Activated CD4-positive, alpha-beta T cell treated with anti-CD3 and anti-CD28 coated beads, Interleukin-2, amount 10 ng/mL, durations not matched to agents 7 days and 5 days (primary cell): ENCODE measurements at regions of chr5 and their contacts with region 1.

Region 1: GRCh38 chr5:134586866-134587524 is 45.6 kb downstream of the SAR1B start:
- DNase-seq: peak; percentile 86
- H3K4me3 Mint-ChIP-seq: no peak overlapping the region
- H3K27ac Mint-ChIP-seq: peak overlapping the region; percentile 81
- H3K4me1 Mint-ChIP-seq: peaks cover 14% of the 10 kb centered on the region
- H3K27me3 Mint-ChIP-seq: no peaks in the 10 kb centered on the region

Region 2: GRCh38 chr5:134304311-134304710 is 282.7 kb before region 1 on chr5:
- CTCF ChIA-PET with region 1: interaction called, 18 read pairs
- POLR2A ChIA-PET with region 1: no interaction called
- DNase-seq: no peak
- H3K4me3 Mint-ChIP-seq: no peak overlapping the region
- H3K27ac Mint-ChIP-seq: no peak overlapping the region
- H3K4me1 Mint-ChIP-seq: peaks cover 8% of the 10 kb centered on the region
- H3K27me3 Mint-ChIP-seq: peaks cover 2% of the 10 kb centered on the region

Region 3: GRCh38 chr5:134493461-134494055 is 93.4 kb before region 1 on chr5:
- CTCF ChIA-PET with region 1: no interaction called
- POLR2A ChIA-PET with region 1: no interaction called
- DNase-seq: no peak
- H3K4me3 Mint-ChIP-seq: no peak overlapping the region
- H3K27ac Mint-ChIP-seq: no peak overlapping the region
- H3K4me1 Mint-ChIP-seq: peaks cover 3% of the 10 kb centered on the region
- H3K27me3 Mint-ChIP-seq: no peaks in the 10 kb centered on the region

Region 4: GRCh38 chr5:134527146-134527960 is 59.6 kb before region 1 on chr5:
- CTCF ChIA-PET with region 1: interaction called, 11 read pairs
- POLR2A ChIA-PET with region 1: no interaction called
- DNase-seq: peak; percentile 61
- H3K4me3 Mint-ChIP-seq: peak overlapping the region; percentile 99
- H3K27ac Mint-ChIP-seq: peak overlapping the region; percentile 92
- H3K4me1 Mint-ChIP-seq: peaks cover 42% of the 10 kb centered on the region
- H3K27me3 Mint-ChIP-seq: peaks cover 3% of the 10 kb centered on the region

Region 5: DNA sequence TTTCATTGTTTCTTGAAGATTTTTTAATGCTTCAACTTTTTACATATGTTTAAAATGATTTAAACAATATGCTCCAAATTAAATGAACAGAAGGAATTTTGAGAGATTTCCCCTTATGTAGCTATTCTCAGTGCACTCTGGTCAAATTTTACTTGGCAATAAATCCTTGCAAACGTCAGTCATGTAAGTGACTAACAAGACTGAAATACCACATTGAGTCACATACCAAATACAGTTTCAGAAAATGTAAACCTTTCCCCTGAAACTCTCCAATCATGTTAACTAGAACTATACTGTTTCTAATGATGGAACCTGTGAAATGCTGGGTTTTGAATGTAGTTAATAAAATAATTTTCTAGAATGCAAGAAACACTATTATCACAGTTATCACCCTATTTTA is 16.1 kb after region 1 on chr5:
- CTCF ChIA-PET with region 1: interaction called, 33 read pairs
- POLR2A ChIA-PET with region 1: no interaction called
- DNase-seq: no peak
- H3K4me3 Mint-ChIP-seq: no peak overlapping the region
- H3K27ac Mint-ChIP-seq: no peak overlapping the region
- H3K4me1 Mint-ChIP-seq: peaks cover 36% of the 10 kb centered on the region
- H3K27me3 Mint-ChIP-seq: no peaks in the 10 kb centered on the region

Region 6: GRCh38 chr5:134634227-134634626 is 47.2 kb after region 1 on chr5:
- CTCF ChIA-PET with region 1: interaction called, 11 read pairs
- POLR2A ChIA-PET with region 1: no interaction called
- DNase-seq: no peak
- H3K4me3 Mint-ChIP-seq: no peak overlapping the region
- H3K27ac Mint-ChIP-seq: no peak overlapping the region
- H3K4me1 Mint-ChIP-seq: peaks cover 23% of the 10 kb centered on the region
- H3K27me3 Mint-ChIP-seq: no peaks in the 10 kb centered on the region